HepG2 (cell line): ENCODE measurements at regions of chr17 and their contacts with region 1.

Region 1: GRCh38 chr17:59707114-59707970 is at the starts of genes PTRH2 and VMP1:
- DNase-seq: peak; percentile 100
- ATAC-seq: peak; percentile 96
- H3K4me3 ChIP-seq: peak within 1 kb of the TSS; percentile 83 to 98 (median 91)
- H3K27ac ChIP-seq: peak within 1 kb of the TSS; percentile 94
- H3K4me1 ChIP-seq: peaks cover 75% of the 10 kb centered on the region
- H3K27me3 ChIP-seq: peaks cover 0 to 5% of the 10 kb centered on the region in 2 experiments; a peak in 1 of 5 replicates
- CTCF ChIP-seq: no peak
- EP300 ChIP-seq: peak; percentile 1 to 28; a peak in 2 of 4 replicates
- POLR2A ChIP-seq: peak; percentile 91 to 99
- RAD21 ChIP-seq: no peak; the same call in 1 of the 2 replicates
- total RNA-seq, gene PTRH2: 48.7 and 67.7 TPM in 2 replicates
- total RNA-seq, gene VMP1: 80.3 and 186 TPM in 2 replicates

Region 2: DNA sequence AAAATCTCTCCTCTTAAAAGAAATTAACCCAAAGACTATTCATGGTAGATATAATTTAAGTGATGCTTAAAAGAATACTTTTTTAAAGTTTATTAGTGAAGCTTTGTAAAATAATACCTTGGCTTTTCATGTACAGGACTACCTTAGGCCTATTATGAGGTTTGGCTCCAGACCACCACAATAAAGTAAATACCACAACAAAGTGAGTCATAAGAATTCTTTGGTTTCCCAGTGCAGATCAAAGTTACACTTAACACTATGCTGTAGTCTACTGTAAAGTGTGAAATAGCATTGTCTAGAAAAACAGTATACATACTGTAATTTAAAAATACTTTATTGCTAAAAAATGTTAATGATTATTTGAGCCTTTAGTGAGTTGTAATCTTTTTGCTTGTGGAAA is 56.0 kb before region 1 on chr17:
- CTCF ChIA-PET with region 1: no interaction called
- POLR2A ChIA-PET with region 1: no interaction called
- in situ Hi-C with region 1: no loop called
- intact Hi-C with region 1: no loop called
- DNase-seq: no peak
- ATAC-seq: no peak
- H3K4me3 ChIP-seq: no peak overlapping the region
- H3K27ac ChIP-seq: no peak overlapping the region
- H3K4me1 ChIP-seq: no peaks in the 10 kb centered on the region
- H3K27me3 ChIP-seq: no peaks in the 10 kb centered on the region
- CTCF ChIP-seq: no peak
- EP300 ChIP-seq: no peak
- POLR2A ChIP-seq: no peak
- RAD21 ChIP-seq: no peak

Region 3: GRCh38 chr17:59725691-59726090 is 18.3 kb after region 1 on chr17:
- CTCF ChIA-PET with region 1: no interaction called
- POLR2A ChIA-PET with region 1: interaction called, 20 read pairs
- in situ Hi-C with region 1: no loop called
- intact Hi-C with region 1: no loop called
- DNase-seq: peak; percentile 68
- ATAC-seq: no peak
- H3K4me3 ChIP-seq: no peak overlapping the region; a peak in 1 of 6 replicates
- H3K27ac ChIP-seq: peak overlapping the region; percentile 44
- H3K4me1 ChIP-seq: peaks cover 87% of the 10 kb centered on the region
- H3K27me3 ChIP-seq: no peaks in the 10 kb centered on the region
- CTCF ChIP-seq: no peak
- EP300 ChIP-seq: peak in 1 of 2 experiments; percentile 68; a peak in 2 of 4 replicates
- POLR2A ChIP-seq: no peak
- RAD21 ChIP-seq: no peak

Region 4: DNA sequence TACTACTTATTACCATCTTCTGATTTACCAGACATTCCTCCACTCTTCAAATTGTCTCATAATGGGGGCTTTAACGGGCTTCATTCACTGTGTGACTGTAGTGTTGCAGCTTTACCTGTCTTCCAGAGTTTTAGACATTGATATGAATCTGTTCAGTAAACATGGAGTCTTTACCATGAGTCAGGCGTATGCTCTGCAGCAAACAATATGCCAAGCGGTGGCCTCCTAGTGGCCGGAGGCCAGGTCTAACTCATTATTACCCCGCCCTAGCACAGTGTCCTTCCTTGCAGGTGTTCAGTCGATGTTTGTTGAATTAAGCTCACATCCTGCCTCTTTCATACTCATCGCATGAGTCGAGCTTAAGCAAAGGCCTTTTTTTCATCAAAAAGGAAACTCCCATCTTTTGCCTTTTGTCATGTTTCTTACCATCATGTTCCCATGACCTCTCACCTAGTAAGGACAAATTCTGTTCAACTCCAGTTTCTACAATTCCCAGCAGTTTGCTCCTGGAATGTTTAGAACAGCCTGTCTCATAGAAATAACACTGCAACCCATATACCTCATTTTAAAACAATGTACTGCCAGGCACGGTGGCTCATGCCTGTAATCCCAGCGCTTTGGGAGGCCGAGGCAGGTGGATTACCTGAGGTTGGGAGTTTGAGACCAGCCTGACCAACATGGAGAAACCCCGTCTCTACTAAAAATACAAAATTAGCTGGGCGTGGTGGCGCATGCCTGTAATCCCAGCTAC is 146.0 kb after region 1 on chr17:
- CTCF ChIA-PET with region 1: no interaction called
- POLR2A ChIA-PET with region 1: interaction called, 14 read pairs
- in situ Hi-C with region 1: no loop called
- intact Hi-C with region 1: no loop called
- DNase-seq: peak; percentile 99
- ATAC-seq: peak; percentile 83
- H3K4me3 ChIP-seq: peak overlapping the region in 1 of 3 experiments; percentile 20; a peak in 1 of 6 replicates
- H3K27ac ChIP-seq: peak overlapping the region; percentile 94
- H3K4me1 ChIP-seq: peaks cover 95% of the 10 kb centered on the region
- H3K27me3 ChIP-seq: no peaks in the 10 kb centered on the region
- CTCF ChIP-seq: peak; percentile 95
- EP300 ChIP-seq: peak; percentile 66 to 94; a peak in 3 of 4 replicates
- POLR2A ChIP-seq: peak in 1 of 2 experiments; percentile 42; a peak in 2 of 4 replicates
- RAD21 ChIP-seq: peak; percentile 87

Region 5: DNA sequence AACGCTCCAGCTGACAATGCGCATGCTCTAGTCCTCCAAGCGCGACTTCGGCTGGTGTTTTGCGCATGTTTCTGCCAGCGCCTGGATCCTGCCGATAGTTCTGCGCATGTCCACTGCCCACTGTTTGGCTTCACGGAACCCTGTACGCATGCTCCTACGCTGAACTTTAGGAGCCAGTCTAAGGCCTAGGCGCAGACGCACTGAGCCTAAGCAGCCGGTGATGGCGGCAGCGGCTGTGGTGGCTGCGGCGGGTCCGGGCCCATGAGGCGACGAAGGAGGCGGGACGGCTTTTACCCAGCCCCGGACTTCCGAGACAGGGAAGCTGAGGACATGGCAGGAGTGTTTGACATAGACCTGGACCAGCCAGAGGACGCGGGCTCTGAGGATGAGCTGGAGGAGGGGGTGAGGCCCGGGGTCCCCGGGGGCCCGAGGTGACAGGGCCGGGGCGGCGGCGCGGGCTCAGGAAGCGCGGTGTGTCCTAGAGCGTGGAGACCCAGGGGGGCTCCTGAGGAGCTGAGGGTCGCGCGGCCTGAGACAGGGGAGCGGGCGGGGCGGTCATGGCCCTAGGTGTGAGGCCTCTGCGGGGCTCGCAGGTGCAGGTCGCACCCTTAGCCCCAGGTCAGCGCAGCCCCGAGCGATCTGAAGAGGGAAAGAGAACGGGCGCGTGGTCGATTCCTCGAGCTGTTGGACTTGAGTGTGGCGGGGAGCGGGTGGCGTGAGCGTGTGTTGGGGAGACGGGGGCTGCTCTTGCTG is 185.8 kb after region 1 on chr17 and contains the starts of genes RPS6KB1 and TUBD1:
- CTCF ChIA-PET with region 1: no interaction called
- POLR2A ChIA-PET with region 1: interaction called, 12 read pairs
- in situ Hi-C with region 1: no loop called
- intact Hi-C with region 1: no loop called
- DNase-seq: peak; percentile 99
- ATAC-seq: peak; percentile 98
- H3K4me3 ChIP-seq: peak within 1 kb of the TSS; percentile 64 to 98 (median 86)
- H3K27ac ChIP-seq: peak within 1 kb of the TSS; percentile 77
- H3K4me1 ChIP-seq: peaks cover 52% of the 10 kb centered on the region
- H3K27me3 ChIP-seq: no peaks in the 10 kb centered on the region; a peak in 1 of 5 replicates
- CTCF ChIP-seq: no peak; the same call in 1 of the 2 replicates
- EP300 ChIP-seq: no peak
- POLR2A ChIP-seq: peak; percentile 96 to 98
- RAD21 ChIP-seq: peak; percentile 31; the same call in 1 of the 2 replicates
- total RNA-seq, gene RPS6KB1: 42.2 and 44.3 TPM in 2 replicates
- total RNA-seq, gene TUBD1: 25.9 and 38.7 TPM in 2 replicates

Region 6: DNA sequence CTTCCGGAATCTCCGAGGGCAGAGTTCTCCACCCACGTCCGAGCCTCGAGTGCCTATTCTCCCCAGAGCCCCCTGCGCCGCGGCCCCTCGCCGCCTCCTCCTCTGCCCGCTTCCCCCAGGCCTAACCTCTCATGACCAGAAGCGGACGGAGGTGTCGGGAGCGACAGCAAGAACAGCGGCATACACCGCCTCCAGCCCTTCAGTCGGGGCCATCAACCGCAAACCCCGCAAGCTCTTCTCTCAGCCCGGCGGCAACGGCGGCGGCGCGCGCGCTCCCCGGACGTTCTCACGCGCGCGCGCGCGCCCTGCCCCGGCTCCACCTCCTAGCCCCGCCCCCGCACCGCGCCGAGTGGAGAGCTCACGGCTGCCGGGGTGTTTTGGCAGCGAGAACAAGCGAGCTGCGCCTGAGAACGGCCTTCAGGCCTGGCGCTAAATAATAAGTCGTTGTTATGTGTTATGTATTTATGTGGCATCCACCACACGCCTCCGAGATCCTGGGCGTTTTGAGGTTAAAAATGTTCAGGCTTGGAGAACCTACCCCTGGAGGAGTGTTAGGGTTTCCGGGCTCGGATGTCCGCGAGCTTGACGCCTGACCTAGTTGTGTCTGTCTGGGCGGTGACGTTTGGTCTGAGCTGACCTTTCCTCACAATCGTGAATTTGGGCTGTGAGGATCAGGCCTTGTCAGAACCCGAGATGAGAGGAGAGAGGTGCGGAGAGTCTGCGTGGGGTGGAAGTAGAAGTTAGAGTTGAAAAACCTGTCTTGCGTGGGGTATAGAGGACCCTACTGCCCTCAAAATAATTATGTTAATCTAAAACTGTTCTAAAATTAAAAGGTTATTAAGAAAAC is 257.4 kb after region 1 on chr17 and contains the start of gene RNFT1:
- CTCF ChIA-PET with region 1: no interaction called
- POLR2A ChIA-PET with region 1: interaction called, 11 read pairs
- in situ Hi-C with region 1: no loop called
- intact Hi-C with region 1: no loop called
- DNase-seq: peak; percentile 68
- ATAC-seq: peak; percentile 94
- H3K4me3 ChIP-seq: peak within 1 kb of the TSS; percentile 83 to 90 (median 86)
- H3K27ac ChIP-seq: peak within 1 kb of the TSS; percentile 63
- H3K4me1 ChIP-seq: peaks cover 14% of the 10 kb centered on the region
- H3K27me3 ChIP-seq: no peaks in the 10 kb centered on the region; a peak in 1 of 5 replicates
- CTCF ChIP-seq: 0 out of 2 replicates have a peak, but pooled peaks have one; percentile 1
- EP300 ChIP-seq: no peak
- POLR2A ChIP-seq: peak; percentile 80 to 91
- RAD21 ChIP-seq: no peak
- total RNA-seq, gene RNFT1: 15.9 and 22.1 TPM in 2 replicates